Body of pancreas (tissue), 4 donors: ENCODE measurements at regions of chr16 and their contacts with region 1.

Region 1: GRCh38 chr16:24041826-24042631 is 206.2 kb downstream of the PRKCB start:
- DNase-seq: peak; percentile 40 to 72 (median 67)
- ATAC-seq: no peak
- H3K4me3 ChIP-seq: no peak overlapping the region
- H3K27ac ChIP-seq: no peak overlapping the region
- H3K4me1 ChIP-seq: no peaks in the 10 kb centered on the region
- H3K27me3 ChIP-seq: no peaks in the 10 kb centered on the region
- CTCF ChIP-seq: peak; percentile 22 to 77 (median 67)
- POLR2A ChIP-seq: no peak

Region 2: DNA sequence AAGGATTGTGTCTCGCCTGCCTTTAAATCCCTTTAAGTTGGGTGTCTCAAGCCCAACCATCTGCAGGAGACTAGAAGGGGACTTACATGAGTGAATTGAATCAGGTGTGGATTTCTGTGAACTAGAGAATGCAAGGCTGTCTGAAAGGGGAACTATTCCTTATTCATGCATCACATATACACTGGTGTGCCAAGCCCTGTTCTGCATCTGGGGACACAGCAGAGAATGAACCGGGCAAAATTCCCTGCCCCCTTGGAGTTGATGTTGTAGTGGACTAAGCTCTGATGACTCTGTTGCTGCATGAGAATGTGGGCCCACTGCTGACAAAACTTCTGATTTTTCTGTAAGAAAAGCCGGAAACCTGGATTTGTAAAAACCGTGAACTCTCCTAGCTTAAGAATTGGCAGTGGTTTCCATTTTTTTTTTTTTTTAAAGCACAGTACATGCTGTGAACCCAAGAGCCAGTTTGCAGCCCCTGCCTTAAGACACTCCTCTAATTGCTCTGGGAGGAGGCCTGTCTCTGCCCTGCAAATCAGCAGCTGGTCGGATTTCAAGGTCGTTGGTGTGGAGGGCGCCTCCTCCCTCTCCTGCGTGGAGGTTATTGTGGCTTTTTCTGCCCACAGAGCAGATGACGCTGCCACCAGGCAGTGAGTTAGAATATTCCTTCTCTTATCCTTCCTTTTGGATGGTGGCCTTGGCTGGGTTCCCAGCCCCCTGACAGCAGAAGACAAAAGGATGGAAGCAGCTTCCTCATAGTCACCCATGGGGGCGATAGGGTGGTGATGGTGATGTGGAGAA is 75.2 kb before region 1 on chr16:
- intact Hi-C with region 1: no loop called
- DNase-seq: no peak
- ATAC-seq: no peak
- H3K4me3 ChIP-seq: no peak overlapping the region
- H3K27ac ChIP-seq: no peak overlapping the region
- H3K4me1 ChIP-seq: no peaks in the 10 kb centered on the region
- H3K27me3 ChIP-seq: no peaks in the 10 kb centered on the region
- CTCF ChIP-seq: no peak
- POLR2A ChIP-seq: no peak

Region 3: GRCh38 chr16:23987443-23987842 is 54.6 kb before region 1 on chr16:
- intact Hi-C with region 1: no loop called
- DNase-seq: no peak
- ATAC-seq: no peak
- H3K4me3 ChIP-seq: no peak overlapping the region
- H3K27ac ChIP-seq: no peak overlapping the region
- H3K4me1 ChIP-seq: no peaks in the 10 kb centered on the region
- H3K27me3 ChIP-seq: no peaks in the 10 kb centered on the region
- CTCF ChIP-seq: no peak
- POLR2A ChIP-seq: no peak

Region 4: DNA sequence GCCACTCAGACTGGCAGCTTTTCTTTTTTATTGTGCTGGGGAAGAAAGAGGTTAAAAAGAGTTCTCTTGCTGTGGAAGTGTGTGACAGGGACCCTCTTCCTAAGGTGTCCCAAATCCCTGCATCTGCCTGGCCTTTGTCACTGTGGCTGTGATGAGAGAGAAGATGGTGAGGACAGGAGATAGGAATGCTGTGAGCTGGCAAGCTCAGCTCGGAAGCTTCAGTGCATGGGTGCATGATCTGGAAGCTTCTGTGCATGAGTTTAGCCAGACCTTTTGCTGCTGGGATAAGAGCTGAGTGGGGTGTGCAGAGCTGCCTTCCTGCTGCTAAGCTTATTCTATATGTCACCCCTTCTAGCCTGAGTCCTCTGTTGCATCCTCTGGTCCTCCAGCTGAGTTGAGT is 110.8 kb after region 1 on chr16:
- intact Hi-C with region 1: no loop called
- DNase-seq: no peak
- ATAC-seq: no peak
- H3K4me3 ChIP-seq: no peak overlapping the region
- H3K27ac ChIP-seq: no peak overlapping the region
- H3K4me1 ChIP-seq: no peaks in the 10 kb centered on the region
- H3K27me3 ChIP-seq: no peaks in the 10 kb centered on the region
- CTCF ChIP-seq: no peak
- POLR2A ChIP-seq: no peak

Region 5: GRCh38 chr16:24253192-24253591 is 211.2 kb after region 1 on chr16:
- intact Hi-C with region 1: loop called (anchors 10 kb)
- DNase-seq: peak; percentile 18 to 41 (median 26)
- ATAC-seq: peak; percentile 50
- H3K4me3 ChIP-seq: no peak overlapping the region
- H3K27ac ChIP-seq: no peak overlapping the region
- H3K4me1 ChIP-seq: no peaks in the 10 kb centered on the region
- H3K27me3 ChIP-seq: peaks cover 0 to 10% of the 10 kb centered on the region in 2 donors
- CTCF ChIP-seq: peak; percentile 36 to 60 (median 52)
- POLR2A ChIP-seq: no peak

Region 6: DNA sequence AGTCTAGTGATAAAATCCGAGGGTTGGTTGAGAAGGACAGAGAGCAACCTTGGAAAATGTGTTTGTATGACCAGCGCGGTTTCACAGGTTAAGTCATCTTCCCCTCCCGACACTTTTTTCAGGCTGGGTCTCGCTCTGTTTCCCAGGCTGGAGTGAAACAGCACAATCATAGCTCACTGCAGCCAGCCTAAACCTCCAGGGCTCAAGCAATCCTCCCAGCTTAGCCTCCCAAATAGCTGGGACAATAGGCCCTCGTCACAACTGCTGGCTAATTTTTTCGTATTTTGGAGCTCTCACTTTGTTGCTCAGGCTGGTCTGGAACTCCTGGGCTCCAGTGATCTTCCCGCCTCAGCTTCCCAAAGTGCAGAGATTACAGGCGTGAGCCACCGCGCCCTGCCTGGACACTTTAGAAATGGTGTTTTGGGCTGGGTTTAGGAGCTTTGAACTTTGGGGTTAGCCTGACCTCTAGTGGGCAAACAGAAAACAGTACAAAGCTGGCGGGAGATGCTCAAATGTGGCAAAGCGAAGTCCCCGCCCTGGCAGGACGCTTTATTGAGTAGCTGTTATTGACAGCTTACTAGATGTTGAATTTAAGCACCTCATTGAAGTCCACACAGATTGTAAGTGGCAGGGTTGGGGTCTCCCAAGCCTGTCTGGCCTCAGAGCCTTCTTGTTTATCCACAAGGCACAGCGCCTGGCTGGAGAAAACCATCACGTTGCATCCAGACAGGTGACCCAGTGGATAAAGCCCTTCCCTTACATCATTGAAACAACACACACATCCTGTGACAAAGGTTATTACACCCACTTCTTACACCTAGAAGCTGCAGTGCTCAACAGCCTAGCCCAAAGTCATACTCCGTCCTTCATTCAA is 462.7 kb after region 1 on chr16:
- intact Hi-C with region 1: loop called (anchors 5 kb)
- DNase-seq: peak; percentile 47 to 55 (median 51)
- ATAC-seq: peak; percentile 83
- H3K4me3 ChIP-seq: no peak overlapping the region
- H3K27ac ChIP-seq: no peak overlapping the region
- H3K4me1 ChIP-seq: no peaks in the 10 kb centered on the region
- H3K27me3 ChIP-seq: no peaks in the 10 kb centered on the region
- CTCF ChIP-seq: peak; percentile 61 to 76 (median 69)
- POLR2A ChIP-seq: no peak